ENCODE measurements at regions of chr14 and their contacts with region 1.

Region 1: DNA sequence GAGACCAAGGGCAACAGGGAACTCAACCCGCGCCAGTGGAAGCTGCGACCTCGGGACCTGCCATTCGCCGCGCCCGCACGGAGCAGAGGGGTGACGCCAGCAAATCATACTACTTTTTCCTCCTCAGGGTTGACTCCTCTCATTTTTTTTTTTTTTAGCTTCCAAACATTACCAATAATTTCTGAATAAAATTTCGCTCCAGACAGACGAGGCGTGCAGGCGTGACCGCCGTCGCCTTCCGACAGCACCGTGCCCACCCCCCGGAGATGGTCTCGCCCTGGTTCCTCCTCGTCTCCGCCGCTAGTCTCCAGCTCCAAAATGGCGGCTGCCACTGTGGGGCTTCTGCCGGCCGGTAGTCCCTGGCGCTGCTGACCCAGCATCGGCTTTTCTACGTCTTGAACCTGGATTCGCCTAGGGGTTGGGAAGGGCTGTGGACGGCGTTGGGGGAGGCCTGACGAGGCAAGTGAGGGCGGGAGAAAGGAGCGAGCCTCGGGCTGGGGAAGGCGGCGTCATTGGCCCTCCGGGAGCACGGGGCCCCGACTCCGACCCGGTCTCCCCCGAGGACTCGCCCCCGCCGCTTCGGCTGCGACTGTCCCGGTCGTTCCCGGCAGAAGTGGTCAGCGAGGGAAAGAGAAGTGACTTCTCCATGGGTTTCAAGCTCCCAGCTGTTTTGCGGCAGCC is at the starts of genes CPSF2 and NDUFB1:
- DNase-seq: peak; percentile 93
- CTCF ChIP-seq: no peak

Region 2: GRCh38 chr14:91901449-91902226 is 220.2 kb before region 1 on chr14:
- CTCF ChIA-PET with region 1: no interaction called
- POLR2A ChIA-PET with region 1: no interaction called
- DNase-seq: no peak
- CTCF ChIP-seq: no peak

Region 3: DNA sequence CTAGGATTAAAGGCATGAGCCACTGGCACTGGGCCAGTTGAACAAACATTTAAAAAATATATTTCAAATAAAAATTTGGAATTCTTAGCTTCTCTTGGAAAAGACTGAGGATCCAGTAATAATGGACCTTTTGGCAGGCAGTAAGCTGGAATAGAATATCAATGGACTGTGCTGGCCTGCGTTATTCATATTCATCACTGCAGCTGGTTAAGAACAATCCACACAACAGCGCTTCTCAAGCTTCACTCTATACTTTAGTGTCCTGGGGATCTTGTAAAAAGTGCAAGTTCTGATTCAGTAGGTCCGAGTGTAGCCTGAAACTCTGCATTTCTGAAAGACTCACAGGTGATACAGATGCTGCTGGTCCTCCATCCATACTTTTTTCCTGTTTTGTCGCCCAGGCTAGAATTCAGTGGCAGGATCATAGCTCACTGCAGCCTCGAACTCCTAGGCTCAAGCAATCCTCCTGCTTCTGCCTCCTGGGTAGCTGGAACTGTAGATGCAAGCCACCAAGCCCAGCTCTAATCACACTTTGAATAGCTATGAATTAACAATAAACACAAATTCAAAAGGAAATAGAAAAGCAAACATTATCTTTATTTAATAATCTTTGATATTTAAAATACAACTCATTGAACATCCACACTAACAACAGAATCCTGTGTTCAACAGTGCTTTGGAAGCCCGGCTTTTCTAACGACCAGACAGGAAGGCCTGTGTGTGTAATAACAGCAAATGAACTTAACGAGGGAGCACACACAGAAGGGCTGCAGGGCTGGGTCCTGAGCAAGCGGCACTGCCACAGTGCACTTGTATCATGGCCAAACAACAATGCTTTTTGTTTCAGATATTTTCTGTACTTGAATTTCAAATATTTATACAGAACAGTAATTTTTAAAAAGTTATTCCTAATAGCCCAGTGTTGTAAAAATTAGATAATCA is 63.6 kb before region 1 on chr14:
- CTCF ChIA-PET with region 1: no interaction called
- POLR2A ChIA-PET with region 1: no interaction called
- DNase-seq: no peak
- CTCF ChIP-seq: no peak

Region 4: GRCh38 chr14:92093320-92093719 is 28.5 kb before region 1 on chr14:
- CTCF ChIA-PET with region 1: interaction called, 4 read pairs
- POLR2A ChIA-PET with region 1: interaction called, 10 read pairs
- DNase-seq: no peak
- CTCF ChIP-seq: peak; percentile 37

Region 5: DNA sequence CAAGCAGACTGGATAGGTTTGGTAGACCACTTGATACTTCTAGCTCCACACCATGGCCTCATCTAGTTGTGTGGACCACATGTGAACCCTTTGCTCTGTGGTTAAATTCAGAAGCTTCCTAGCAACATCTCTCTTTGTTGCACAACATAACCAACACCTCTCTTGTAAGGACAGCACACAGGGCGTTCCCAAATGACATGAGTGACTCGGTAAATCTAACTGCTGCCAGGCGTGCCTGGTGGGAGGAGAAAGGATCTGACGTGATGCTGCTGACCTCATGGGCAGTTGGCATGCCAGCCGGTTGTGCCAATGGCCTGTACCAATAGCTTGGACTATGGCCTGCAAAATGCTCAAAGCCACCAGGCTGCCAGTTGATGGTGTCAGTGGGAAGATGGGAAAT is 93.8 kb after region 1 on chr14:
- CTCF ChIA-PET with region 1: no interaction called
- POLR2A ChIA-PET with region 1: no interaction called
- DNase-seq: no peak
- CTCF ChIP-seq: no peak